CD14-positive monocyte (primary cell): ENCODE measurements at regions of chr17 and their contacts with region 1.

Region 1: GRCh38 chr17:80219013-80219762 is 945 bp downstream of the SGSH start:
- DNase-seq: peak; percentile 96 to 98 (median 98)
- H3K4me3 ChIP-seq: peak overlapping the region; percentile 58 to 95 (median 86)
- H3K4me3 Mint-ChIP-seq: peak overlapping the region; percentile 91 to 93
- H3K27ac ChIP-seq: peak overlapping the region; percentile 99
- H3K27ac Mint-ChIP-seq: peak overlapping the region; percentile 93 to 99 (median 97)
- H3K4me1 ChIP-seq: peaks cover 29 to 44% of the 10 kb centered on the region in 2 donors
- H3K4me1 Mint-ChIP-seq: peaks cover 35% of the 10 kb centered on the region
- H3K27me3 ChIP-seq: peaks cover 3 to 25% of the 10 kb centered on the region in 2 donors
- H3K27me3 Mint-ChIP-seq: peaks cover 34 to 63% (median 44%) of the 10 kb centered on the region in 3 donors
- CTCF ChIP-seq: no peak

Region 2: DNA sequence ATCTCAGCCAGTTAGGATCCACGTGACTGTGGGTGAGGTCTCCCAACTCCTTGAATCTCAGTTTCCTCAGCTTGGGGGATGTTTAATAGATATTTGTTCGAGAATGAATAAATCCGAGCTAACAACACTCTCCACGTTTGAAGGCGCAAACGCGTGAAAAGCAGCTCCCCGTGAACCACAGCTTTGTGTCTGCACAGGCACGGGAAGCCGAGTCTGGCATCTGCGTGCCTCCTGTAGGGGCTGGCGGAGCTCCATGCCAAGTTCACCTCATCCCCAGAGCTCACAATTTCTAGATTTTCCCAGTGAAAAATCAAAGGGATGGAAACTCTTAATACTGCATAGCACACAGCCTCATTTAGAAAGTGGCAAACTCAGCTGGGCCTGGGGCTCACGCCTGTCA is 13.4 kb before region 1 on chr17:
- intact Hi-C with region 1: loop called in 1 of 2 experiments (anchors 2 kb)
- DNase-seq: no peak
- H3K4me3 ChIP-seq: no peak overlapping the region
- H3K4me3 Mint-ChIP-seq: no peak overlapping the region
- H3K27ac ChIP-seq: peak overlapping the region in 1 of 2 donors; percentile 41
- H3K27ac Mint-ChIP-seq: peak overlapping the region in 3 of 7 donors; percentile 66 to 91 (median 91)
- H3K4me1 ChIP-seq: peaks cover 16 to 26% of the 10 kb centered on the region in 2 donors
- H3K4me1 Mint-ChIP-seq: peaks cover 14% of the 10 kb centered on the region
- H3K27me3 ChIP-seq: no peaks in the 10 kb centered on the region
- H3K27me3 Mint-ChIP-seq: peaks cover 2 to 20% (median 10%) of the 10 kb centered on the region in 3 donors
- CTCF ChIP-seq: no peak